ENCODE measurements at regions of chr7 and their contacts with region 1.

Region 1: GRCh38 chr7:134690016-134690415 is 43.4 kb downstream of the BPGM start:
- DNase-seq: no peak
- H3K4me3 ChIP-seq: peak overlapping the region in 3 of 4 donors; percentile 30 to 38 (median 34)
- H3K27ac ChIP-seq: peak overlapping the region; percentile 75 to 90 (median 82)
- H3K4me1 ChIP-seq: peaks cover 0 to 57% (median 36%) of the 10 kb centered on the region in 4 donors
- H3K27me3 ChIP-seq: no peaks in the 10 kb centered on the region
- CTCF ChIP-seq: peak; percentile 62 to 83 (median 70)
- EP300 ChIP-seq: no peak
- POLR2A ChIP-seq: no peak

Region 2: DNA sequence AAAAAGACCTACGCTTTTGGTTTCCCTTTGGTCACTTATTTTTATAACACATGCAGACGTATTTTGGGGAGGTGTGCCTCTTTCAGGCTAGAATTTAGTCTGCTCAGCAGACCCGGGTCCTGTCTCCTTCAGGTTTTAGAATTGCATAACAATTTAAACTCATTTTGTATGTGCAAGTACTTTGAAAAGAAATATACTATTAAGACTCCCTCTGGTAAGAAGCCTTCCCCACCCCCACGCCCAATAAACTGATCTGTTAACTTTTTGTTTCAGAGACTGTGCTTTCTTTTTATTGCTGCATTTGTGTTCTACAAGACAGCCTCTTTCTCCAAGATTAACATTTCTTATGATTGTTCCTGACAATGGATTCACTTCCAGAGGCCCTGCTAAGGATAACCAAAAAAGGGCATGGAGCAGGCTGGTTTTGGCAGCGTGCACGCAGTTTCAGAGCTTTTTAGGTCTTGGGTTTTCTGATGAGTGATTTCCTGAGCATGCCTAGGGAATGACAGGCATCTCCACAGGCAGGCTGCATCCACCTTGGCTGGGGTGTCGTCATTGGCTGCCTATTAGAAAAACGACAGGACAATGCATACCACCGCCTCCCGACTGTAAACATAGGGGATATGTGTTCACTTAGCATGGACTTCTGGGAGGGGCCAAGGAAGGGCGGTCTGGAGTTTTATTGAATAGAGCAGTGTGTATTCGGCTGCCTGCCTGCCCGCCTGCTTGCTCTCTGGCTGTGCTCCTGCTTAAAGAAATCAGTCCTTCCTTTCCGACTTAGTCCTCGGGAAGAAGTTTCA is 89.1 kb after region 1 on chr7 and contains the start of gene CALD1:
- intact Hi-C with region 1: loop called (anchors 2 kb)
- DNase-seq: peak; percentile 96
- H3K4me3 ChIP-seq: peak within 1 kb of the TSS; percentile 52 to 66 (median 66)
- H3K27ac ChIP-seq: peak within 1 kb of the TSS; percentile 91 to 94 (median 93)
- H3K4me1 ChIP-seq: peaks cover 0 to 39% (median 22%) of the 10 kb centered on the region in 4 donors
- H3K27me3 ChIP-seq: no peaks in the 10 kb centered on the region
- CTCF ChIP-seq: no peak
- EP300 ChIP-seq: peak; percentile 35 to 88 (median 80)
- POLR2A ChIP-seq: peak; percentile 84 to 97
- total RNA-seq, gene CALD1: 1,069 to 2,150 (median 1,500) TPM

Region 3: GRCh38 chr7:134875867-134876266 is 185.9 kb after region 1 on chr7:
- intact Hi-C with region 1: no loop called
- DNase-seq: no peak
- H3K4me3 ChIP-seq: no peak overlapping the region
- H3K27ac ChIP-seq: peak overlapping the region; percentile 51 to 88 (median 78)
- H3K4me1 ChIP-seq: peaks cover 0 to 98% (median 74%) of the 10 kb centered on the region in 4 donors
- H3K27me3 ChIP-seq: no peaks in the 10 kb centered on the region
- CTCF ChIP-seq: no peak
- EP300 ChIP-seq: peak in 2 of 4 donors; percentile 2 to 23
- POLR2A ChIP-seq: no peak

Region 4: DNA sequence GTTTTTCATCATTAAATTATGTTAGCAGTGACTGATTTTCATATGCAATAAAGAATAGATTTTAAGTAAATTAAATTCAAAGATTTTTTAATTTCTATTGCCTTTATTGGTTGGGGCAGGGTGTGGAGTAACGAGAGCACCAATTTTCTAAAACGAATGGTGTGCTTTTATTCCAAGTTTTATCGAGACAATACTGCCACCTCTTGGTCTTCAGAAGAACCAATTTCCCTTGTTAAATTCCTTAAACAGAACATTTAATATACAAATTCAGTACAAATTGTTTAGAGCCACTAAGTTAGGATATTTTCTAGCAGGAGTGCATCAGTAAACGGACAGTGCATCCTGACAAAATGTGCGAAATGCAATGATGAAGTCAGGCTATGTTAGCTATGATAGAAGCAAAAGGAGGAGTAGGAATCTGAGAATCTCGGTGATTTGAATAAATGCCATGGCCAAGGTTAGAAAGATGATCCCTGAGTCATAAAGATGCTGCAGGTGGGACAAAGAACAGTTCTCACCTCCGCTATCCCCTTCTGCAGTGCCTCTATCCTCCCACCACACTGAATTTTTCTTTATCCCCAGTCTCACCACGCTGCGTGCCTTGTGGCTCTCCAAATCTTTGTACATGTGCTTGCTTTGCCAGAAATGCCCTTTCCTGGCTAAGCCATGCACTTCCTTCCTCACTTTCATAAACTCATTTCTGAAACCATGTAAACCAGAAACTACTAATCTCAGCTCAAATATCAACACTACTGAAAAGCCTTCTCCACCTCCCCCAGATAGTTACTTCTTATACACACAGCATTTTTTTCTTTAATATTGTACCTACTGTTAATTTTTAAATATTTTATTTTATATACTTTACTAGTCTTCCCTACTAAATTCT is 264.4 kb after region 1 on chr7:
- intact Hi-C with region 1: loop called (anchors 1 kb)
- DNase-seq: no peak
- H3K4me3 ChIP-seq: no peak overlapping the region
- H3K27ac ChIP-seq: peak overlapping the region; percentile 4 to 60 (median 38)
- H3K4me1 ChIP-seq: peaks cover 0 to 5% (median 2%) of the 10 kb centered on the region in 4 donors
- H3K27me3 ChIP-seq: no peaks in the 10 kb centered on the region
- CTCF ChIP-seq: peak in 2 of 4 experiments; percentile 43 to 47
- EP300 ChIP-seq: no peak
- POLR2A ChIP-seq: no peak

Region 5: GRCh38 chr7:135147899-135148721 is 458.1 kb after region 1 on chr7 and contains the start of gene TMEM140:
- intact Hi-C with region 1: loop called (anchors 5 kb)
- DNase-seq: no peak
- H3K4me3 ChIP-seq: peak within 1 kb of the TSS; percentile 43 to 57 (median 51)
- H3K27ac ChIP-seq: peak within 1 kb of the TSS; percentile 86 to 97 (median 88)
- H3K4me1 ChIP-seq: peaks cover 0 to 36% (median 22%) of the 10 kb centered on the region in 4 donors
- H3K27me3 ChIP-seq: no peaks in the 10 kb centered on the region
- CTCF ChIP-seq: no peak
- EP300 ChIP-seq: peak in 3 of 4 donors; percentile 29 to 96 (median 85)
- POLR2A ChIP-seq: peak in 1 of 2 donors; percentile 37
- total RNA-seq, gene TMEM140: 15.0 to 29.6 (median 22.8) TPM